HCT116 (cell line): ENCODE measurements at regions of chr11 and their contacts with region 1.

Region 1: GRCh38 chr11:12893787-12894672 is 115.1 kb upstream of the RASSF10 start:
- DNase-seq: peak; percentile 15
- ATAC-seq: peak; percentile 87
- H3K4me3 ChIP-seq: no peak overlapping the region
- H3K27ac ChIP-seq: no peak overlapping the region
- H3K4me1 ChIP-seq: no peaks in the 10 kb centered on the region
- H3K27me3 ChIP-seq: no peaks in the 10 kb centered on the region
- CTCF ChIP-seq: peak; percentile 71 to 94 (median 80); a peak in 5 of 6 replicates
- POLR2A ChIP-seq: no peak
- RAD21 ChIP-seq: peak; percentile 86

Region 2: GRCh38 chr11:12052676-12053605 is 841.1 kb before region 1 on chr11:
- CTCF ChIA-PET with region 1: no interaction called
- POLR2A ChIA-PET with region 1: no interaction called
- RAD21 ChIA-PET with region 1: no interaction called
- intact Hi-C with region 1: loop called (anchors 5 kb)
- DNase-seq: no peak
- ATAC-seq: peak; percentile 78
- H3K4me3 ChIP-seq: no peak overlapping the region
- H3K27ac ChIP-seq: no peak overlapping the region
- H3K4me1 ChIP-seq: no peaks in the 10 kb centered on the region
- H3K27me3 ChIP-seq: no peaks in the 10 kb centered on the region
- CTCF ChIP-seq: peak; percentile 33 to 47 (median 44); a peak in 4 of 6 replicates
- POLR2A ChIP-seq: no peak
- RAD21 ChIP-seq: peak; percentile 67

Region 3: DNA sequence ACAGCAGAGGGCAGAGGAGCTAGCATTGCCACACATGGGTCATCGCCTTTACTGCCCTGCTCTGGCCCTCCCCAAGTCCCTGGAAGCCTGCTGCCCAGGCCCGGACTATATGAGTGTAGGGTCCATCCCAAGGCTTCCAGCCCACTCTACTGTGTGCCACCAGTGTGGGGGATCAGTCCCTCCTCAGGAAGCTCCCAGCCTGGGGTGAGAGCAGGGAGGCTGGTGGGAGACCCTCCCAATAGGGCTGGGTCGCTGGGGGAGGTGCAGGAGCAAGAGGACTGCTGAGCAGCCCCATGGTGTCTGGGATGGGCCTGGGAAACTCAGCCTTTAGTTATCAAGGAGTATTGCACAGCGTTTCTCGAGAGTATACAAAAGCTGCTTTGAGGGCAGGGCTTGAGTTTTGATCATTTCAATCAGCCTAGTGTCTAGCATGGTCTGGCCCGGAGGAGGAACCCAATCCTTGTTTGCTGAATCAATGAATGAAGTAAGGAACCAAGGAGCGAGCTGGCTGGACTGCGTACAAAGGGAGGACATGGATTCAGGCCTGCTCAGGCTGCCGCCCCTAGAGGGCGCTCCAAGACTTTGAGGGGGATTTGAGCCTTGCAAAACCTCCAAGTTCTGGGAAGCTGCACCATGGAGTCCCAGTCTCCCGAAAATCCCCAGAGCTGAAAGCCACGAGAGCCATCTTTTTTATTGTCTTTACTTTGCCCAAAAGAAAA is 605.7 kb before region 1 on chr11:
- CTCF ChIA-PET with region 1: interaction called, 17 read pairs
- POLR2A ChIA-PET with region 1: no interaction called
- RAD21 ChIA-PET with region 1: interaction called in 1 of 2 experiments, 4 read pairs
- intact Hi-C with region 1: loop called (anchors 2 kb)
- DNase-seq: peak; percentile 71
- ATAC-seq: peak; percentile 54
- H3K4me3 ChIP-seq: peak overlapping the region; percentile 20 to 50; a peak in 2 of 4 replicates
- H3K27ac ChIP-seq: peak overlapping the region; percentile 62
- H3K4me1 ChIP-seq: peaks cover 25 to 39% of the 10 kb centered on the region in 2 experiments
- H3K27me3 ChIP-seq: no peaks in the 10 kb centered on the region
- CTCF ChIP-seq: peak; percentile 83 to 96 (median 95)
- POLR2A ChIP-seq: no peak
- RAD21 ChIP-seq: peak; percentile 95

Region 4: GRCh38 chr11:12737024-12737423 is 157.0 kb before region 1 on chr11:
- CTCF ChIA-PET with region 1: no interaction called
- POLR2A ChIA-PET with region 1: no interaction called
- RAD21 ChIA-PET with region 1: no interaction called
- intact Hi-C with region 1: no loop called
- DNase-seq: no peak
- ATAC-seq: no peak
- H3K4me3 ChIP-seq: no peak overlapping the region
- H3K27ac ChIP-seq: no peak overlapping the region
- H3K4me1 ChIP-seq: peaks cover 8 to 11% of the 10 kb centered on the region in 2 experiments; a peak in 3 of 4 replicates
- H3K27me3 ChIP-seq: no peaks in the 10 kb centered on the region
- CTCF ChIP-seq: no peak
- POLR2A ChIP-seq: no peak
- RAD21 ChIP-seq: no peak

Region 5: DNA sequence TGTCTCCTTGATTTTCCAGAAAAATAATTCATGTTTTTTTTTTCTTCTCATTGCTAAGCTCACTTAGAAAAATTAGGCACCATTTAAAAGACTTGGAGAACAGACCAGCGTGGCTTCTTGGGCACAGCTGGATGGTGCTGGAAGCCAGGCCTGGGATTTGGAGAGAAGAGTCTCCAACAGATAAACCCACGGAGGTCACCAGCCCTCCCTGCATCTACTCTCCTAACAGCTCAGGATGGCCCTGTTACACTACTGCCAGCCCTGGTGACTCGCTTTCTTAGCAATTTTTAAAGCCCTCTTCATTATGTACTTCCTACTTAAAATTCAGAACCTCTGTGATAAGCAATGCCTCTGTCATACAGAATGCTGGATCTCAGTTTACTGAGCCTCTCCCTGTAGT is 600.0 kb after region 1 on chr11:
- CTCF ChIA-PET with region 1: no interaction called
- POLR2A ChIA-PET with region 1: no interaction called
- RAD21 ChIA-PET with region 1: no interaction called
- intact Hi-C with region 1: no loop called
- DNase-seq: no peak
- ATAC-seq: no peak
- H3K4me3 ChIP-seq: no peak overlapping the region
- H3K27ac ChIP-seq: no peak overlapping the region
- H3K4me1 ChIP-seq: no peaks in the 10 kb centered on the region
- H3K27me3 ChIP-seq: no peaks in the 10 kb centered on the region
- CTCF ChIP-seq: no peak
- POLR2A ChIP-seq: no peak
- RAD21 ChIP-seq: no peak